Calu3 (cell line): ENCODE measurements at regions of chr5 and their contacts with region 1.

Region 1: GRCh38 chr5:43197535-43197934 is 5.5 kb downstream of the NIM1K start:
- DNase-seq: no peak
- H3K4me3 Mint-ChIP-seq: no peak overlapping the region
- H3K27ac Mint-ChIP-seq: no peak overlapping the region
- H3K4me1 Mint-ChIP-seq: no peaks in the 10 kb centered on the region
- H3K27me3 Mint-ChIP-seq: no peaks in the 10 kb centered on the region
- CTCF ChIP-seq: no peak

Region 2: DNA sequence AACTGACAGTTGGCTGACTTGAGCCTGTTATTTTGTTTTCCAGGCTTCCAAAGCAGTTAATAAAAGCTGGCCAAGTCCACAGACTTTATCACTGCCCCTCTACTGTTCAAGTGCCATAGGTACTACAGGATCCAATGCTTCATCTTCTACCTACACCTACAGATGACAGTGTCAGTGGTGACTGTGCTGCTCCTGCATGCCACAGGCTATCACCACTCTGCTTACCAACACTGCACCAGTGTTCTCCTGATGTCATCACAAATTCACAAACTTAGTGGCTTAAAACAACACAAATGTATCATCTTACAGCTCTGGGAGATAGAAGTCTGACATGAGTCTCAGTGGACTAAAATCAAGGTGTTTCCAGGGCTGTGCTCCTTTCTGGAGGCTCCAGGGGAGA is 89.1 kb after region 1 on chr5:
- CTCF ChIA-PET with region 1: interaction called, 11 read pairs
- intact Hi-C with region 1: no loop called
- DNase-seq: no peak
- H3K4me3 Mint-ChIP-seq: no peak overlapping the region
- H3K27ac Mint-ChIP-seq: peak overlapping the region; percentile 83
- H3K4me1 Mint-ChIP-seq: peaks cover 9% of the 10 kb centered on the region
- H3K27me3 Mint-ChIP-seq: no peaks in the 10 kb centered on the region
- CTCF ChIP-seq: no peak